ENCODE measurements at regions of chrX and their contacts with region 1.

Region 1: DNA sequence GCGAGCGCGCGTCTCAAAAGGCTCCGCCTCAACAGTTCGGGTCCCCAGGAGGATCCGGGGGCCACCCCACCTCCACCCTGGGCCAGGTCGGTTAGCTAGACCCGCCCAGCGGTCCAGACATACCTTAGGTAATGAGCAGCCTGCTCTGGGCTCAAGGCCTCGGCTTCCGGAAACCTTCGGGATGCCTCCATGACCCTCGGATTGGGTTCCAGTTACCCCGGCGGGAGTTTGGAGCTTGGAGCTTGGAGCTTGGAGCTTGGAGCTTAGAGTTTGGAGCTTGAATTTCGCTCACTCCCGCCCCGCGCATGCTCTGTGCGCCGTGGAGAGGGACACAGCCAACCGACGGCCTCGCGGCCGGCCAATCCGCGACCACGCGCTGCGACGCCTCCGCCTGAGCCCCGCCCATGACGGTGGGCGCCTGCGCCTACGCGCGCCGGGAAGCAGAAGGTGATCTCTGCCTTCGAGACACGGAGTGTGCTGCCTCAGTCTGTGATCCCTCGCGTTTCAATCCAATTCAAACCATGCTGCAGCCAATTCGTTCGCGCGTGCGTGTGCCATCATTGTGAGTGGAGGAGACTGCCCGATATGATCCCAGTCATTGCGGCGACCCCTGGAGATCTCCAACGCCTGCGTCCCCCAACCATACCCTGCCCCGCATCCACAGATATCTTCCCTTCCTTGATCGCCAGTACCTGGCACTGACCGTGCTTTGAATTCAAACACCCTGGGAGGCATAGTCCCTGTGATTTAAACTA is at the start of gene ERCC6L:
- H3K4me3 ChIP-seq: peak within 1 kb of the TSS; percentile 56
- H3K27ac ChIP-seq: peak within 1 kb of the TSS; percentile 74
- H3K4me1 ChIP-seq: no peaks in the 10 kb centered on the region
- CTCF ChIP-seq: 0 out of 2 replicates have a peak, but pooled peaks have one; percentile 29

Region 2: GRCh38 chrX:72159769-72160168 is 79.1 kb before region 1 on chrX:
- CTCF ChIA-PET with region 1: no interaction called
- POLR2A ChIA-PET with region 1: no interaction called
- H3K4me3 ChIP-seq: no peak overlapping the region
- H3K27ac ChIP-seq: no peak overlapping the region
- H3K4me1 ChIP-seq: no peaks in the 10 kb centered on the region
- CTCF ChIP-seq: no peak

Region 3: GRCh38 chrX:72181178-72182125 is 57.4 kb before region 1 on chrX and contains the start of gene PIN4:
- CTCF ChIA-PET with region 1: interaction called, 3 read pairs
- POLR2A ChIA-PET with region 1: interaction called, 17 read pairs
- H3K4me3 ChIP-seq: peak within 1 kb of the TSS; percentile 68
- H3K27ac ChIP-seq: peak within 1 kb of the TSS; percentile 85
- H3K4me1 ChIP-seq: peaks cover 5% of the 10 kb centered on the region; the same call in 1 of the 2 replicates
- CTCF ChIP-seq: no peak

Measured in HEK293 (cell line).